RWPE1 (cell line): ENCODE measurements at regions of chr1 and their contacts with region 1.

Region 1: DNA sequence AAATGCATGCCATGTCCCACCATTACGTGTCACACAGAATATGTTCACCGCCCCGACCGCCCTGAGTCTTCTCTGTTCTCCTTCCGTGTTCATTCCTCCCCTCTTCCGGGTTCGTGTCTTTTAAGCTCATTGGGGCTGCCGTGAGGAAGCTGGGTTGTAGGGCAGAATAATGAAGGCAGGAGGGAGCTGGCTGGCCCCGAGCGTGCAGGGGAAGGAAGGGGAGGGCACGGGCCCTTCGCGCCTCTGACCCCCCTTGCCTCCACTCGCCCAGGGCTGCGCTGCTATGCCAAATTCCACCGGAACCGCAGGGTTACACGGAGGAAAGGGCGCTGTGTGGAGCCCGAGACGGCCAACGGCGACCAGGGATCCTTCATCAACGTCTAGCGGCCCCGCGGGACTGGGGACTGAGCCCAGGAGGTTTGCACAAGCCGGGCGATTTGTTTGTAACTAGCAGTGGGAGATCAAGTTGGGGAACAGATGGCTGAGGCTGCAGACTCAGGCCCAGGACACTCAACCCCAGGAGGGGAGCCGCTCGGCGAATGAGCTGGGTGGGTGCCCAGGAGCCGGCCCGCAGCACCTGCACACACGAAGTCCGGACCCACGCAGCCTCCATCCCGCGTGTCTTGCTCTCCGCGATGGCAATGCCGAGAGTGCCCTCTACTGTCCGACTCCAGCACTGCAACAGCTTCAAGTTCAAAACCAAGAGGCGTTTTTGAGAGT is 16.5 kb upstream of the AGTRAP start:
- DNase-seq: peak; percentile 25
- H3K27ac ChIP-seq: peak overlapping the region; percentile 11; the same call in 1 of the 2 replicates
- CTCF ChIP-seq: peak; percentile 94

Region 2: GRCh38 chr1:11654137-11654938 is 65.1 kb before region 1 on chr1 and contains the starts of genes FBXO2 and FBXO44:
- CTCF ChIA-PET with region 1: interaction called, 13 read pairs
- POLR2A ChIA-PET with region 1: no interaction called
- DNase-seq: peak; percentile 73
- H3K27ac ChIP-seq: peak within 1 kb of the TSS; percentile 97
- CTCF ChIP-seq: no peak